ENCODE measurements at regions of chr16 and their contacts with region 1.

Region 1: DNA sequence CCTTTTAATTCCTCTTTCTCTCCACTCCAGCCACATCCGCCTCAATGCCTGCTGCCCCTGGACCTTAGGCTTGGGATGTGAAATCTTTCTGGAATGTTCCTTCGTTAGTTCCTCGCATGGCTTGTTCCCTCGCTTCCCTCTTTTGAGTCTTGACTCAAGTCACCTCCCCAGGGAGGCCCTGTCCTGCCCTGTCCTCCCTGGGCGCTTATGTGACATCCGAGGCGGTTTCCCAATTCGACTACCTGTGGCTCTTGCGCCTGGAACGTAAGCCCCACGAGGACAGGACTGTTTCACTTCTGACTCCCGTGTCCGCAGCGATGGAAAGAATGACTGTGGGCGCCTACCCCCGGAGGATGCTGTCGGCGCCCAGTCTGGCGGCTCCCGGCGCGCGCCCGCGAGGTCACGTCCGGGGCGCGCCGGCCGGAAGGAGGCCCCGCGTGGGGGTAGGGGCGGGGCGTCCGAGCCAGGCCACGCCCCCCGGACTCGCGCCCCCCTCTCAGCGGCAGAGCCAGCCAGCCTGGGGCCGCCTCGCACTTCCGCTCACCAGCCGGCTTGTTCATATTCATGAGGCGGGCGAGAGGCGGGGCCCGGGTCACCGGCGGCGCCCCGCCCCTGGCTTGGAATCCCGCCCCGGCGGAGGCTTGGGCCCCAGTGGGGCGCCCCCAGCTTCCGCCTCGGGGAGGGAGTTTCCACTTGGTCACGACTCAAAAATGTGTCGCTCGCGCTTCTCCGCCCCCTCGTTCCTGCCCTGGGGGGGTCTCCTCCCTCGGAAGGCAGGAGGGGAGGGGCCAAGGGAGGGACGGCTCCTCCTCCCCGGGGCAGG is 8.4 kb upstream of the GLIS2 start:
- DNase-seq: peak; percentile 67
- H3K4me3 ChIP-seq: peak overlapping the region; percentile 70
- CTCF ChIP-seq: no peak

Region 2: DNA sequence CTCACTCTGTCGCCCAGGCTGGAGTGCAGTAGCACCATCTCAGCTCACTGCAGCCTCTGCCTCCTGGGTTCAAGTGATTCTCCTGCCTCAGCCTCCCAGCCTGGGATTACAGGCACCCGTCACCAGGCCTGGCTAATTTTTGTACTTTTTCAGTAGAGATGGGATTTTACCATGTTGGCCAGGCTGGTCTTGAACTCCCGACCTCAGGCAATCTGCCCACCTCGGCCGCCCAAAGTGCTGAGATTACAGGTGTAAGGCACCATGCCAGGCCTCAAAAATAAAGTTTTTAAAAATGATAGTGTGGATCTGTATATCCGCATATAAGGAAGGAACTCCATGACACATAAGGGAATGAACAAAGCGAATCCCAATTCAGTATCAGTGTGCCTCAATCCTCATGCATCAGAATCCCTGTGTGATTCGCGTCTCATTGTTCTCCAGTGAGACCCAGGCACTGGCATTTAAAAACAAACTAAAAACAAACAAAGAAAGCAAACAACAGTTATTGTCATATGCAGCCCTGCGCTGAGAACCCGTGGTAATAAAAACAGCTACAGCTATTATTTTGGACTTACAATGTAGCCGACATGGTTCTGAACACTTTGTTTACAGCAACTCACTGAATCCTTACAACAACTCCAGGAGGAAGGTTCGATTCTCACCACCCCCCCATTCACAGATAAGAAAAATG is 372.8 kb before region 1 on chr16:
- CTCF ChIA-PET with region 1: no interaction called
- POLR2A ChIA-PET with region 1: no interaction called
- DNase-seq: no peak
- H3K4me3 ChIP-seq: no peak overlapping the region
- CTCF ChIP-seq: no peak

Region 3: GRCh38 chr16:4123616-4124265 is 183.7 kb before region 1 on chr16:
- CTCF ChIA-PET with region 1: no interaction called
- POLR2A ChIA-PET with region 1: no interaction called
- DNase-seq: peak; percentile 29
- H3K4me3 ChIP-seq: no peak overlapping the region
- CTCF ChIP-seq: no peak

Region 4: GRCh38 chr16:4271176-4272066 is 36.0 kb before region 1 on chr16:
- CTCF ChIA-PET with region 1: interaction called, 12 read pairs
- POLR2A ChIA-PET with region 1: interaction called, 3 read pairs
- DNase-seq: no peak
- H3K4me3 ChIP-seq: peak overlapping the region; percentile 93
- CTCF ChIP-seq: no peak

Region 5: GRCh38 chr16:4323845-4324478 is 16.5 kb after region 1 on chr16:
- CTCF ChIA-PET with region 1: interaction called, 59 read pairs
- POLR2A ChIA-PET with region 1: no interaction called
- DNase-seq: no peak
- H3K4me3 ChIP-seq: no peak overlapping the region; the same call in 1 of the 2 replicates
- CTCF ChIP-seq: no peak

Region 6: GRCh38 chr16:4384509-4384942 is 77.1 kb after region 1 on chr16:
- CTCF ChIA-PET with region 1: no interaction called
- POLR2A ChIA-PET with region 1: no interaction called
- DNase-seq: no peak
- H3K4me3 ChIP-seq: no peak overlapping the region
- CTCF ChIP-seq: no peak

Measured in AG04449 (cell line).